ENCODE measurements at regions of chrX and their contacts with region 1.

Region 1: GRCh38 chrX:47193475-47194193 is at the start of gene UBA1:
- DNase-seq: peak; percentile 94
- ATAC-seq: peak; percentile 69
- H3K4me3 Mint-ChIP-seq: peak within 1 kb of the TSS; percentile 91
- H3K27ac Mint-ChIP-seq: peak within 1 kb of the TSS; percentile 92
- H3K4me1 Mint-ChIP-seq: peaks cover 54% of the 10 kb centered on the region
- H3K27me3 Mint-ChIP-seq: no peaks in the 10 kb centered on the region
- total RNA-seq, gene UBA1: 224 to 249 TPM

Region 2: DNA sequence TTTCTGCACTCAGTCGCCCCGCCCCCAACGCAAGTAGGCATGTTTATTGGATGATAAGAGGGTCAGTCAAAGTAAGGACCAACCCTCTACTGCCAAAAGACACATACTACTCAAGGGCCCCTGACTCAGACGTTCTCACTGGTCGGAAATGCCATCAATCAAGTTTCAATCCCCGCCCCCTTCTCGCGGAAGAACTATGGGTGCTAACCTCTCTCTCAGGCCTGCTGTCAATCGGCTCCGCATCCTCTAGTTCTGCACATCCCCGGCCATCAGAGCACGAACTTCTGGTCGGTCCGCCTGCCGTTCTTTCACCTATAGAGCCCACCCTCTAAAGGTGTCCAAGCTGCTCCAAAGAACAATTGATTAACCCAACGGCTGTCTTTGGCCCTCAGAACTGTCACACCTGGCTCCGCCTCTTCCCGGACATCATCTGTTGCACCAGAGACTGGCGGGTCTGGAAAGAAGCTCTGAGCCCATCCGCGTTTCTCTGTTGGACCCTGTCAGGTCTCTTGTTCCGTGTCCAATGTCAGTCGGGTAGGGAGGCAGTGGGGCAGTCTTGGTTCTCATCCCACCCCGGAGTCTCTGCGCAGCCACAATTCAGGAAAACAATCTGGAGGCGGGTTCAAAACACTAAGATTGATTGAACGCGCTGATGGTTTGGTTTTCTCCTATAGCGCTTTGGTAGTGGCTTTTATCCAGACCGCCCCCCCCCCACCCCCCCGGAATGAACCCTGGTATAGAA is 64.3 kb before region 1 on chrX:
- CTCF ChIA-PET with region 1: no interaction called
- POLR2A ChIA-PET with region 1: no interaction called
- intact Hi-C with region 1: loop called in 1 of 2 experiments (anchors 1 kb)
- DNase-seq: peak; percentile 91
- ATAC-seq: peak; percentile 100
- H3K4me3 Mint-ChIP-seq: peak overlapping the region; percentile 89
- H3K27ac Mint-ChIP-seq: peak overlapping the region; percentile 99
- H3K4me1 Mint-ChIP-seq: peaks cover 6% of the 10 kb centered on the region
- H3K27me3 Mint-ChIP-seq: no peaks in the 10 kb centered on the region

Region 3: GRCh38 chrX:47233337-47234113 is 39.9 kb after region 1 on chrX:
- CTCF ChIA-PET with region 1: no interaction called
- POLR2A ChIA-PET with region 1: interaction called, 8 read pairs
- intact Hi-C with region 1: loop called (anchors 1 to 5 kb)
- DNase-seq: peak; percentile 96
- ATAC-seq: peak; percentile 89
- H3K4me3 Mint-ChIP-seq: peak overlapping the region; percentile 77
- H3K27ac Mint-ChIP-seq: peak overlapping the region; percentile 95
- H3K4me1 Mint-ChIP-seq: peaks cover 23% of the 10 kb centered on the region
- H3K27me3 Mint-ChIP-seq: no peaks in the 10 kb centered on the region

Region 4: DNA sequence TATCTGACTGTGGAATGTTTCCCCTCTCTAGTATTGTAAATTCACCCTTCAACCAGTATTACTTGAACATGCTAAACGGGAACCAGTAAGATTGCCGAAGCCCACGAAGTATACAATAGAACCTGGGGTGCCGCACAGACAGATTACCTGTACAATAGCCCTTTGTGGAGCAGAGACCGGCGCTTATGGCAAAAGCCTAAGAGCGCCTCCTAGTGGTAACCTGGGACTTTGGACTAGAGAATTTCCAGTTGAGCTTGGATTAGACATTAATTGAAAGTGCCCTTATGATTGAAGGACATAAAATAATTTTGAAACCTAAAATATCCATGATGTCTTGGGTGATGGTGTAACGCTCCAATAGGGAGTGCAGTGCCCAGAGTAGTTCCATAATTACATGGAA is 190.9 kb after region 1 on chrX:
- CTCF ChIA-PET with region 1: interaction called, 25 read pairs
- POLR2A ChIA-PET with region 1: no interaction called
- intact Hi-C with region 1: loop called (anchors 1 kb)
- DNase-seq: peak; percentile 77
- ATAC-seq: peak; percentile 75
- H3K4me3 Mint-ChIP-seq: no peak overlapping the region
- H3K27ac Mint-ChIP-seq: no peak overlapping the region
- H3K4me1 Mint-ChIP-seq: peaks cover 18% of the 10 kb centered on the region
- H3K27me3 Mint-ChIP-seq: no peaks in the 10 kb centered on the region

Region 5: DNA sequence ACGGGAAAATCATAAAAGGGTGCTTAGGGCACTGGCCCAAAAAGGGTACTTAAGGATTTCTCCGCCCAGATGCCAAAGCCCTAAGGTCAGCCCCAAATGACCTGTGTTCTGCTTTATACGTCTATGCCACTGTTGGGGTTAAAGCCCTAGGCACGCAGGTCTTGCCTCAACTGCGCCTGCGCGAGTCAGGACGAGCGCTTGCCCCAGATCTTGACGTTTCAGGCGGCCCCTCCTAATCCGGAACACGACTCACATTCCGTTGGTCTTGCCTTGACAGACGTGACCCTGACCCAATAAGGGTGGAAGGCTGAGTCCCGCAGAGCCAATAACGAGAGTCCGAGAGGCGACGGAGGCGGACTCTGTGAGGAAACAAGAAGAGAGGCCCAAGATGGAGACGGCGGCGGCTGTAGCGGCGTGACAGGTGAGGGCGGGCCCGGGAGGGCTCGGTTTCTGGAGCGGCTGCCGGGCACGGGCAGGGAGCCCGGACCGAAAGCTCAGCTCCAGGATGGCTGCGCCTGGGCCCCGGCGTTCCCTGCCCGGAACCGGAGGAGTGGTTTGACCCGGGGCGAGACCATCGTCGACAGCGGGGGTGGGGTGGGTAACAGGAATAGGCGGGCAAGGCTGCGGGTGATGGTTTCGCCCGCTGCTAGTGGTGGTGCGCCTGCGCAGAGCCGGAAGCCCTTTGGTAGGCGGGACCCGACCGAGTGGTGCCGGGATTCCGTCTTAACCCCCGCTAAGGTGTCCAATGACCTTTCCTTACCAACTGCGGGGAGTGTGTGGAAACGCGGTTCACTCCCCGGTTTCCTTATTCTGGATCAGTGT is 367.4 kb after region 1 on chrX and contains the start of gene ARAF:
- CTCF ChIA-PET with region 1: no interaction called
- POLR2A ChIA-PET with region 1: no interaction called
- intact Hi-C with region 1: loop called in 1 of 2 experiments (anchors 1 kb)
- DNase-seq: peak; percentile 96
- ATAC-seq: peak; percentile 91
- H3K4me3 Mint-ChIP-seq: peak within 1 kb of the TSS; percentile 89
- H3K27ac Mint-ChIP-seq: peak within 1 kb of the TSS; percentile 94
- H3K4me1 Mint-ChIP-seq: peaks cover 37% of the 10 kb centered on the region
- H3K27me3 Mint-ChIP-seq: no peaks in the 10 kb centered on the region
- total RNA-seq, gene ARAF: 58.8 to 59.2 TPM

Region 6: DNA sequence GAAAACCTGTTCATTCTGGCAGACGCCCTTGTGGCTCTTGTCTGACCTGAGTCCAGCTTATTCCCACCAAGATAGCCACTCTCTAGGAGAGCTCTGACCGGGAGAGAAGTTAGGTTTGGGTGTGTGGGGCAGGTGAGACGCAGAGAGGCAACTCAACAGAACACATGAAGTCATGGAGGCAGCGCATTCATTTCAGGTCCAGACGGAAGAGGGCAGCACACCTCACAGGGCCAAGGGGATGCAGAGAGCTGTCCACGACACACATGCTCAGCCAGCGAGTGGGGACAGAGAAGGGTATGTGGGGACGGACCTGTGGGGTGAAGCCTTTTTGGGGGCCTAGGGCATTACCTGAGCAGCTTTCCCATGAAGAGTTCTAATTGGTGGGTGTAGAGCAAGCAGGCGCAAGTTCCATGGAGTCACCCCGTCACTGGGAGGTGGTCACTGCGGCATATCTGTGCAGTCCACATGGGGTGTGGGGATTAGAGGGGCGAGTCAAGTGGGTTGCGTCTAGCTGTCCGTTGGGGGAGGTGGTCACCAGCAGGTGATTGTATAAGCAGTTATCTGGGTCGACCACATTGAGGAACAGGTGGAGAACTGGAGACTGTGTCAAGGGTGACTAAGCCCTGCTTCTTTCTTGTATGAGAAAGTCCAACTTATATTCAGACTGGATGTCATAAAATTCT is 489.7 kb after region 1 on chrX:
- CTCF ChIA-PET with region 1: no interaction called
- POLR2A ChIA-PET with region 1: interaction called, 11 read pairs
- intact Hi-C with region 1: no loop called
- DNase-seq: no peak
- ATAC-seq: no peak
- H3K4me3 Mint-ChIP-seq: no peak overlapping the region
- H3K27ac Mint-ChIP-seq: no peak overlapping the region
- H3K4me1 Mint-ChIP-seq: no peaks in the 10 kb centered on the region
- H3K27me3 Mint-ChIP-seq: peaks cover 1% of the 10 kb centered on the region

Measured in activated CD4-positive, alpha-beta T cell treated with anti-CD3 and anti-CD28 coated beads for 36 hours (primary cell).